Activated CD4-positive, alpha-beta memory T cell treated with anti-CD3 and anti-CD28 coated beads for 36 hours (primary cell): ENCODE measurements at regions of chr14 and their contacts with region 1.

Region 1: GRCh38 chr14:92768795-92769194 is 20.4 kb upstream of the LGMN start:
- DNase-seq: no peak
- H3K4me3 Mint-ChIP-seq: no peak overlapping the region
- H3K27ac Mint-ChIP-seq: peak overlapping the region; percentile 2
- H3K4me1 Mint-ChIP-seq: peaks cover 34% of the 10 kb centered on the region
- H3K27me3 Mint-ChIP-seq: peaks cover 11% of the 10 kb centered on the region

Region 2: GRCh38 chr14:92074555-92074954 is 694.2 kb before region 1 on chr14:
- CTCF ChIA-PET with region 1: no interaction called
- POLR2A ChIA-PET with region 1: no interaction called
- intact Hi-C with region 1: no loop called
- DNase-seq: no peak
- H3K4me3 Mint-ChIP-seq: no peak overlapping the region
- H3K27ac Mint-ChIP-seq: no peak overlapping the region
- H3K4me1 Mint-ChIP-seq: no peaks in the 10 kb centered on the region
- H3K27me3 Mint-ChIP-seq: no peaks in the 10 kb centered on the region

Region 3: DNA sequence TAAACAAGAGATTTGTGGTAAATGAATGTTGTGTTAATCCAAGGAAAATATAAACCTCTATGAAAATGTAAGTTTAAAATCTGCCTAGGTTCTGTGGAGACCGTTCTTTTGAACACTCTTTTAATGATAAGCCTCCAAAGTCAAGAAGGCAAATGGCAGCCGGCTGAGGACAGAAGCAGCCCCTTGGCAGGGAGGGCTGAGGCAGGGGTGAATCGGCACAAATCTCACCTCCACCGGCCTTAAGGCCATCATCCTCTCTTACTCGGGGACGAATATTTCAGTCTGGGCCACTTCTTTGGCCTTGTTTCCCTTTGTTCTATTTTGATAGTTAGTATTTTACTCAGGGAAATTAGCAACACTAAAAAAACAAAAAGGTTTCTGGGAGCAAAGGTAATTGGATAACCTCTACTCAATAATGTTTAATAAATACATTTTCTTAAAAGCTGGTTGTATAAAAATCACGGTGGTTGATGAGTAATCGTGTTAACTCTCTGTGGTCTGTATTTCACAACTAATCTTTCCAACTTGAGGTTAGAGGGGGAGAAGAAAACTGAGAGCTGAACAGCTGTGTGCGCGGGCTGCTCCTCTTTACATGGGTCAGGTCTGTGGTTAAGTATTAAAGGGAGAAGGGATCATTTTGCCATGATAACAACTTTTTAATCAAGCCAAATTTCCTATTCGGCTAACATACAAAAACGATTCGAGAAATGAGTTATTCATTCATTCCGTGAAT is 39.0 kb before region 1 on chr14:
- CTCF ChIA-PET with region 1: interaction called, 4 read pairs
- POLR2A ChIA-PET with region 1: interaction called, 7 read pairs
- intact Hi-C with region 1: loop called (anchors 1 kb)
- DNase-seq: peak; percentile 62
- H3K4me3 Mint-ChIP-seq: no peak overlapping the region
- H3K27ac Mint-ChIP-seq: peak overlapping the region; percentile 59
- H3K4me1 Mint-ChIP-seq: peaks cover 24% of the 10 kb centered on the region
- H3K27me3 Mint-ChIP-seq: peaks cover 22% of the 10 kb centered on the region

Region 4: GRCh38 chr14:92748259-92749016 is 20.4 kb before region 1 on chr14 and contains the start of gene LGMN:
- CTCF ChIA-PET with region 1: interaction called, 3 read pairs
- POLR2A ChIA-PET with region 1: no interaction called
- intact Hi-C with region 1: loop called (anchors 1 kb)
- DNase-seq: peak; percentile 89
- H3K4me3 Mint-ChIP-seq: peak within 1 kb of the TSS; percentile 74
- H3K27ac Mint-ChIP-seq: no peak within 1 kb of the TSS
- H3K4me1 Mint-ChIP-seq: peaks cover 36% of the 10 kb centered on the region
- H3K27me3 Mint-ChIP-seq: peaks cover 48% of the 10 kb centered on the region
- total RNA-seq, gene LGMN: 9.2 to 10.2 TPM